Activated T-helper 1 cell treated with anti-CD3 and anti-CD28 coated beads, Interleukin-12 subunit alpha, Interleukin-12 subunit beta, Interleukin-2, Interleukin-4 antibody, amounts not matched to agents 30 ng/mL and 10 ng/mL and 1 ng/mL, durations not matched to agents 14 hours and 24 hours and 36 hours (primary cell): ENCODE measurements at regions of chr11 and their contacts with region 1.

Region 1: DNA sequence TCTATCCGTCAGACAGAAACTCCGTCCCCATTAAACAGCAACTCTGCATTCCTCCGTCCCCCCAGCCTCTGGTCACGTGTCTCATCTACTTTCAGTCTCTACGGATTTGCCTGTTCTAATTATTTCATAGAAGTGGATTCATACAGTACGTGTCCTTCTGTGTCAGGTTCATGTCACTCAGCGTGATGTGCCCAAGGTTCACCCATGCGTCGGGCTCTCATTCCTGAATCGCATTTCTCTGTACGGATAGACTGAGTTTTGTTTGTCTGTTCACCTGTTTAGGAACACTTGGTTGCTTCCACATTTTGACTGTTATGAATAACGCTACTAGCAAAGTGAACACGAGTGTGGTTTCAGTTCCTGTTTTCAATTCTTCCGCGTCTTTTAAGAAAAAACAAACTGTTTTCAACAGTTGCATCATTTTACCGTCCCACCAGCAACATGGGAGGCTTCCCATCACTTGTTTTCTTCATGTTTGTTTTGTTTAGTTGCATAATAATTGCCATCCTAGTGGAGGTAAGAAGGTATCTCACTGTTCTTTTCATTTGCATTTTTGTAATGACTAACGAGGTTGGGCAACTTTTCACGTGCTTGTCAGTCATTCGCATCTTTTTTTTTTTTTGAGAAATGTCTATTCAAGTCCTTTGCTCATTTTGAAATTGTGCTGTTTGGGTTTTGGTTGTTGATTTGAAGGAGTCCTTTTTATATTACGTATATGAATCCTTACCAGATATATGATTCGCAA is 8.9 kb upstream of the NLRP6 start:
- DNase-seq: peak; percentile 53
- H3K4me3 Mint-ChIP-seq: peak overlapping the region; percentile 88
- H3K27ac Mint-ChIP-seq: peak overlapping the region; percentile 97
- H3K4me1 Mint-ChIP-seq: peaks cover 31% of the 10 kb centered on the region
- H3K27me3 Mint-ChIP-seq: peaks cover 6% of the 10 kb centered on the region

Region 2: GRCh38 chr11:207208-207862 is 62.0 kb before region 1 on chr11 and contains the starts of genes BET1L and RIC8A:
- intact Hi-C with region 1: loop called (anchors 1 kb)
- DNase-seq: peak; percentile 97
- H3K4me3 Mint-ChIP-seq: peak within 1 kb of the TSS; percentile 89
- H3K27ac Mint-ChIP-seq: peak within 1 kb of the TSS; percentile 98
- H3K4me1 Mint-ChIP-seq: peaks cover 55% of the 10 kb centered on the region
- H3K27me3 Mint-ChIP-seq: no peaks in the 10 kb centered on the region
- total RNA-seq, gene BET1L: 42.0 and 48.7 TPM in 2 replicates
- total RNA-seq, gene RIC8A: 132 and 149 TPM in 2 replicates

Region 3: DNA sequence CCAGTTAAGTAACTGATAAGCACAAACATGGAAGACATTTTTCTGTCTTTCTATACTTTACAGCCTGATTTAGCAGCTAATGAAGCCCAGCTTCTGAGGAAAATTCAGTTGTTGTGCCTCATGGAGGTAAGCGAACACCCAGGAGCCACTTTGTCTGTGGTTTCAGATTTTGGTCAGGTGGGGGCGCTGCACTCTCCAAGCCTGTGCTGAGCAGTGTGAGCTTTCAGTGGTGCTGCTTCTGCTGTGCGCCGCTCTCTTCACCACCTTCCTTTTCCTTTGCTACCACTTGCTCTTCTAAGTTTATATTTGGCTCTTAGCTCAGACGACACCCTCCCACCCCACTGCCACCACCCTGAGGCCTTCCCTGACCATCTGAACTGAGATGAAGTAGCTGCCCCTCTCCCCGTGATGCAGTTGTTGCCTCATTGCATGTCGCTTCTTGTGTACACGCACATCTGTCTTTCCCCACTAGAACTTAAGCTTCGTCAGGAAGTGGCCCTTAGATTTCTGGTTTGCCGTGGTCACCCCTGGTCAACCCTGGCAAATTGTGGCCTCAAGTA is 18.5 kb before region 1 on chr11:
- intact Hi-C with region 1: no loop called
- DNase-seq: peak; percentile 65
- H3K4me3 Mint-ChIP-seq: no peak overlapping the region
- H3K27ac Mint-ChIP-seq: peak overlapping the region; percentile 1
- H3K4me1 Mint-ChIP-seq: peaks cover 26% of the 10 kb centered on the region
- H3K27me3 Mint-ChIP-seq: no peaks in the 10 kb centered on the region

Region 4: DNA sequence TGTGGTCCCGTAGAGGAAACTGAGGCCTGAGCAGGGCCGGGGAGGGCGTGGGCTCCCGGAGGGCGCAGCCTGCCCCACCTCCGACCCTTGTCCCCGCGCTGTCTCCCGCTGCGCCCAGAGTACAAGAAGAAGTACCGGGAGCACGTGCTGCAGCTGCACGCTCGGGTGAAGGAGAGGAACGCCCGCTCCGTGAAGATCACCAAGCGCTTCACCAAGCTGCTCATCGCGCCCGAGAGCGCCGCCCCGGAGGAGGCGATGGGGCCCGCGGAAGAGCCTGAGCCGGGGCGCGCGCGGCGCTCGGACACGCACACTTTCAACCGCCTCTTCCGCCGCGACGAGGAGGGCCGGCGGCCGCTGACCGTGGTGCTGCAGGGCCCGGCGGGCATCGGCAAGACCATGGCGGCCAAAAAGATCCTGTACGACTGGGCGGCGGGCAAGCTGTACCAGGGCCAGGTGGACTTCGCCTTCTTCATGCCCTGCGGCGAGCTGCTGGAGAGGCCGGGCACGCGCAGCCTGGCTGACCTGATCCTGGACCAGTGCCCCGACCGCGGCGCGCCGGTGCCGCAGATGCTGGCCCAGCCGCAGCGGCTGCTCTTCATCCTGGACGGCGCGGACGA is 10.8 kb after region 1 on chr11:
- intact Hi-C with region 1: loop called (anchors 1 kb)
- DNase-seq: no peak
- H3K4me3 Mint-ChIP-seq: peak overlapping the region; percentile 80
- H3K27ac Mint-ChIP-seq: peak overlapping the region; percentile 77
- H3K4me1 Mint-ChIP-seq: peaks cover 49% of the 10 kb centered on the region
- H3K27me3 Mint-ChIP-seq: peaks cover 29% of the 10 kb centered on the region

Region 5: GRCh38 chr11:313787-314547 is 44.6 kb after region 1 on chr11 and contains the start of gene IFITM1:
- intact Hi-C with region 1: loop called (anchors 1 kb)
- DNase-seq: peak; percentile 64
- H3K4me3 Mint-ChIP-seq: peak within 1 kb of the TSS; percentile 93
- H3K27ac Mint-ChIP-seq: peak within 1 kb of the TSS; percentile 96
- H3K4me1 Mint-ChIP-seq: peaks cover 44% of the 10 kb centered on the region
- H3K27me3 Mint-ChIP-seq: no peaks in the 10 kb centered on the region
- total RNA-seq, gene IFITM1: 208 and 214 TPM in 2 replicates

Region 6: DNA sequence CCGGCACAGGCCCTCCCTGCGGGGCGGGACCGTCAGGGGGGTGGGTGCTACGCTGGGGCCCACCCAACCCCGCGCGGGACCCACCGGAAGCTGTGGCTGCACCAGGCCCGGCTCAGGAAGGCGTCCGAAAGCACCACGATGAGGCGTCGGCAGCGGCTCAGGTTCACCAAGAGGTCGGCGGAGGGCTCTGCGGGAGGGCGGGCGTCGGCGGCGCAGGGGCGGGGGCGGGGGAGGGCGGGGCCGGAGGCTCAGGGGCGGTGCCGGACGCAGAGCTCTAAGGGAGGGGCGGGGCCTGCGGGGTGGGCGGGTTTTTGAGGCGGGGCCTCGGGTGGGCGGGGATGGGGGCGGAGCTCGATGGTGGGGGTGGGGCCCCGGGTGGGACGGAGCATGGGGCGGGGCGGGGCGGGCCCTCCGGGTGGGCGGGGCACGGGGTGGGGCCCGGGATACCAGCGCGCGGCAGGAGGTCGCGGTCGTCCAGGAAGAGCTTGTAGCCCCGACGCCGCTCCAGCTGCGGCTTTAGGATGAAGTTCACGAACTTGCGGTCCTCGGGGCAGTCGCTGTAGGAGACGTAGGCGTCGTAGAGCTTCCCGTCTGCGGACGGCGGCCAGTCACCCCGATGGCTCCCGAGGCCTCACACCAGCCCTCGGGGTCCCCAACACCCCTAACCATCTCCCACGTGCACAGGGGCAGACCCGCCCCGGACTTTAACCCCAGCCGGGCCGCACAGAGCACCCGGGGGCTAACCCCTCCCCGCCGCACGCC is 137.8 kb after region 1 on chr11:
- intact Hi-C with region 1: loop called (anchors 1 kb)
- DNase-seq: peak; percentile 84
- H3K4me3 Mint-ChIP-seq: no peak overlapping the region
- H3K27ac Mint-ChIP-seq: peak overlapping the region; percentile 23
- H3K4me1 Mint-ChIP-seq: no peaks in the 10 kb centered on the region
- H3K27me3 Mint-ChIP-seq: peaks cover 2% of the 10 kb centered on the region

Region 7: DNA sequence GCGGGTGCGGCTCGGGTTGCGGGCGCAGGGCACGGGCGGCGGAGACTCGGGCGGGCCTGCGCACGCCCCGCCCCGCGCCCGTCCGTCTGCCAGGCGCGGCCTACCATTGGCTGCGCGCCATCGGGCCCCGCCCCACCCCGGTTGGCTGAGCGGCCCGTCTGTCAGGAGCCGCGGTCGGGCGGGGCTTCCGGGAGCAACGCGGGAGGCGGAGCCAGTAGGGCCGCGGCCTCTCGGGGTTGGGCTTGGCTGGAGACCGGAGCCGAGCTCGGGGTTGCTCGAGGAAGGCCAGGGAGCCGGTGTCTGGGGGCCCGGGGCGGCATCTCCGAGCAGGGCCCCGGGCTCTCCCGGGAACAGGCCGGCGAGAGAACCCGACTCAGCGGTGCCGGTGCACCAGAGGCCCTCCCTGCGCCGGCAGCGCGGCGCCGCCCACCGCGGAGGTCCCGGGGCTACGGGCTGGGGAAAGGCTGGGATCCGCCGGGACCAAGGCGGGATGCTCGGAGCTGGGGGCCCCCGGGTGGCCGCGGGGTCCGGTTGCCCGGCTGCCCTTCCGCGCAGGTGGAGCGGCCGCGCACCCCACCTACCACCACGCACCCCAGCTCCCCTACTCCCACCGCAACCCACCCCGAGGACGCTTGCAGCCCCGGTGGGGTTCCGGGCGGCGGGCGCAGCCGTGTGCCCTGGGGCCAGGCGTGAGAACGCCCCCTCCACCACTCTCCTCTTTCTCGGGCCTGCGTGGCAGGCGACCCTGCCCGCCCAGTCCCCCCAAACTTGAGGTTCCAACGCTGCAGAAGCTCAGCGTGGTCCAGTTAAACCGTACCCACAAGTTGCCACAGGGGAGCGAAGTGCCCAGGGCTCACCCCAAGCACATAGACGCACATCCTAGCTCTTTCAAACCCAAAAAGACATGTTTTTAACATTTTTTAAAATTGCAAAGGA is 266.5 kb after region 1 on chr11 and contains the start of gene HRAS:
- intact Hi-C with region 1: no loop called
- DNase-seq: peak; percentile 97
- H3K4me3 Mint-ChIP-seq: peak within 1 kb of the TSS; percentile 87
- H3K27ac Mint-ChIP-seq: peak within 1 kb of the TSS; percentile 89
- H3K4me1 Mint-ChIP-seq: peaks cover 9% of the 10 kb centered on the region
- H3K27me3 Mint-ChIP-seq: no peaks in the 10 kb centered on the region
- total RNA-seq, gene HRAS: 76.6 and 88.7 TPM in 2 replicates

Region 8: DNA sequence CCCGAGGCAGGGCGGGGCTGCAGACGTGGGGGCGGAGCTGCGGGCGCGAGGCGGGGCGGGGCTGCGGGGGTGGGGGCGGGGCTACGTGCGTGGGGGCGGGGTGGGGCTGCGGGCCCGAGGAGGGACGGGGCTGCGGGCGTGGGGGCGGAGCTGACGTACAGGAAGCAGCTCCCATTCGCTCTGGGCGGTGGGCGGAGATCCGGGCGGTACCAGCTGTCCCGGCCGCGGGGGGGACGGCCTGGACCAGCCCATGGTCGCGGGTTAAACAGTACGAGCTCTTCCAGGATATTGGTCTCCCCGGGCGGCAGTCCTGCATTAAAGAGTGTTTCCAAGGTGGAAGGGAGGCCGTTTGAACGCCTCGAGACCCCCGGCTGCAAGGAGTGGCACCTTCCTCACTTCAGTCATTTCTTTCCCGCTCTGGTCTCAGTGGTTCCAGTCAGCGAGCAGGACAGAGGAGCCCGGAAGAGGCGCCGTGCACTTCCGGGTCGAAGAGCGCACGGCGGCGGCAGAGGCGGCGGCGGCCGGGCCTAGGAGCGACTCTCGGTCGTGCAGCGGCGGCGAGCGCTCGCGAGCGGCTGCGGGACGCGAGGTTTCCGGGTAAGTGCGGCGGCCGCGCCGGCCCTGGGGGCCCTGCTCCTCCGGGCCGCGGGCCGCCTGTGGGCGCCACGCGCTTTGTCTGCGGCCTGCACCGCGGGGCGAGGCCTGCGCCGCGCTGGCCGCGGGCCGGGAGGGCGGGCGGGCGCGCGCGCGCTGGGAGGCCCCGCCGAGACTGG is 306.9 kb after region 1 on chr11 and contains the start of gene PHRF1:
- intact Hi-C with region 1: loop called (anchors 5 kb)
- DNase-seq: peak; percentile 91
- H3K4me3 Mint-ChIP-seq: peak within 1 kb of the TSS; percentile 94
- H3K27ac Mint-ChIP-seq: peak within 1 kb of the TSS; percentile 100
- H3K4me1 Mint-ChIP-seq: peaks cover 41% of the 10 kb centered on the region
- H3K27me3 Mint-ChIP-seq: peaks cover 15% of the 10 kb centered on the region
- total RNA-seq, gene PHRF1: 58.6 and 59.8 TPM in 2 replicates

Region 9: GRCh38 chr11:674406-674805 is 405.1 kb after region 1 on chr11:
- intact Hi-C with region 1: no loop called
- DNase-seq: no peak
- H3K4me3 Mint-ChIP-seq: no peak overlapping the region
- H3K27ac Mint-ChIP-seq: no peak overlapping the region
- H3K4me1 Mint-ChIP-seq: no peaks in the 10 kb centered on the region
- H3K27me3 Mint-ChIP-seq: no peaks in the 10 kb centered on the region